ENCODE measurements at regions of chr7 and their contacts with region 1.

Region 1: GRCh38 chr7:144127703-144128334 is 4.8 kb downstream of the OR2A14 start:
- DNase-seq: peak; percentile 94
- H3K4me3 Mint-ChIP-seq: no peak overlapping the region
- H3K27ac Mint-ChIP-seq: no peak overlapping the region
- H3K4me1 Mint-ChIP-seq: no peaks in the 10 kb centered on the region
- H3K27me3 Mint-ChIP-seq: no peaks in the 10 kb centered on the region
- CTCF ChIP-seq: peak; percentile 90

Region 2: GRCh38 chr7:143735962-143736361 is 391.9 kb before region 1 on chr7:
- CTCF ChIA-PET with region 1: interaction called, 8 read pairs
- intact Hi-C with region 1: loop called (anchors 5 kb)
- DNase-seq: no peak
- H3K4me3 Mint-ChIP-seq: no peak overlapping the region
- H3K27ac Mint-ChIP-seq: no peak overlapping the region
- H3K4me1 Mint-ChIP-seq: no peaks in the 10 kb centered on the region
- H3K27me3 Mint-ChIP-seq: no peaks in the 10 kb centered on the region
- CTCF ChIP-seq: no peak

Region 3: DNA sequence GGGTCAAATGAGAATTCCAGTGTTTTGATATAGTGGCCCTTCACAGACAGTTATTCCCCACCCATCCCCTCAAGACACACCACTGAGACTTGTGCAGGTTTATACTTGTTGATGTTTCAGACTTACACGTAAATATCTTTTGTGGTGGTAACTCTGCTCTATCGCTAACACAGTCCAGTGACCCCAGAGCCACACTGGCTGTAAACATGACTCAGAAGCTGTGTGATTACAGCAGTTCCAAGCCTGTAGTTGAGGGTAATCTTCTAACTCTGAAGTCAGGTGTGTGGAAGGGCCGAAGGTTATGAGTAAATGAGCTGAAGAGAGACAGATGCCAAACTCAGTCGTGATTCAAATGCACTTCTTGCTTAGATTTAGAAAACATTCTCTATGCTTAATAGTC is 256.3 kb after region 1 on chr7:
- CTCF ChIA-PET with region 1: no interaction called
- intact Hi-C with region 1: no loop called
- DNase-seq: peak; percentile 32
- H3K4me3 Mint-ChIP-seq: peak overlapping the region; percentile 57
- H3K27ac Mint-ChIP-seq: peak overlapping the region; percentile 74
- H3K4me1 Mint-ChIP-seq: peaks cover 43% of the 10 kb centered on the region
- H3K27me3 Mint-ChIP-seq: no peaks in the 10 kb centered on the region
- CTCF ChIP-seq: no peak

Measured in Calu3 (cell line).